CD14-positive monocyte (primary cell): ENCODE measurements at regions of chr20 and their contacts with region 1.

Region 1: DNA sequence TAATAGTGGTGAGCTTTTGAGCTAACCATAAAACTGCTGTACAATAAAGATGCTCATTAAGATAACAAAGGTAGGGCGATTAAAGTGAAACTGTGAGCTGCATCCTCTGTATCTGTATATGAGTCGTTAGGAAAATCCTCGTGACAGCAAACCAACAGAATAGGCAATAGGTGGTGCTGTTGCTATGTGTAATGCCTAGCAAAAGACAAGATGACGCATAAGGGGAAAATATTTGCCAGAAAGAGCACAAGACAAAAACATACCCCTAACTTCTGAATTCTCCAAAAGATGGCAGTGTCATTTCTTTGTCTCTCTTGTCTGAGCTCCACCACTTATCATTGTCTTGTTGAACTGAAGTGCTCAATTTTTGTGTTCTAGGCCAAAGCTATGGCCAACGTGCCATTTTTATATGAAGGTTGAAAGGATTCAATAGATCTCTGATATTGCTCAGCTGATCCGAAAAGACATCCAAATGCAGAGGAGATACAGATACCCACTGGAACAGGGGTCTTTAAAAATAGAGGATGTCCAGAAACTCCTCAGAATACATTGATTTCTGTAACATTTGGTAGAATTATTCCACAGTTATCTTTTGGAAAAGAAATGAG is 56.3 kb upstream of the ANKEF1 start:
- DNase-seq: peak; percentile 64 to 80 (median 79)
- H3K4me3 ChIP-seq: no peak overlapping the region
- H3K4me3 Mint-ChIP-seq: no peak overlapping the region
- H3K27ac ChIP-seq: no peak overlapping the region
- H3K27ac Mint-ChIP-seq: no peak overlapping the region
- H3K4me1 ChIP-seq: peaks cover 0 to 4% of the 10 kb centered on the region in 2 donors
- H3K4me1 Mint-ChIP-seq: peaks cover 6% of the 10 kb centered on the region
- H3K27me3 ChIP-seq: peaks cover 0 to 11% of the 10 kb centered on the region in 2 donors
- H3K27me3 Mint-ChIP-seq: peaks cover 5 to 9% (median 6%) of the 10 kb centered on the region in 3 donors
- CTCF ChIP-seq: peak; percentile 80

Region 2: DNA sequence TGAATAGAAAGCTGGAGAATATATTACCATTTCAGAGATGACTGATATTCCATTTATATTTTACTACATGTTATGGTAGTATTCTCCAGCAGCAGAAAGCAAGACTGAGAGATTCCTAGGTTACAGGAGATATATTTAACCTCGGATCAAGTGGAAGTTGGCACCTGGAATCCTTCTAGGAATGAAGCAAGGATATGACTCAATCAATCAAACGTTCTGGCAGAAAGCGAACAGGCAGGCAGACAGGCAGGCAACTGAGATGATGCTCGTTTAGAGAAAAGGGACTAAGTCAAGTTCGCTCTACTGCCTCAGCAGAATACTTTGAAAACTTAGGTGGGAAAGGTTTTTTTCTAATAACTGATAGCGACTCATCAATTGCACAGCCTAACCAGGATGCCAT is 185.8 kb before region 1 on chr20:
- intact Hi-C with region 1: no loop called
- DNase-seq: no peak
- H3K4me3 ChIP-seq: no peak overlapping the region
- H3K4me3 Mint-ChIP-seq: no peak overlapping the region
- H3K27ac ChIP-seq: no peak overlapping the region
- H3K27ac Mint-ChIP-seq: no peak overlapping the region
- H3K4me1 ChIP-seq: no peaks in the 10 kb centered on the region
- H3K4me1 Mint-ChIP-seq: no peaks in the 10 kb centered on the region
- H3K27me3 ChIP-seq: no peaks in the 10 kb centered on the region
- H3K27me3 Mint-ChIP-seq: peaks cover 0 to 2% (median 1%) of the 10 kb centered on the region in 3 donors
- CTCF ChIP-seq: no peak

Region 3: DNA sequence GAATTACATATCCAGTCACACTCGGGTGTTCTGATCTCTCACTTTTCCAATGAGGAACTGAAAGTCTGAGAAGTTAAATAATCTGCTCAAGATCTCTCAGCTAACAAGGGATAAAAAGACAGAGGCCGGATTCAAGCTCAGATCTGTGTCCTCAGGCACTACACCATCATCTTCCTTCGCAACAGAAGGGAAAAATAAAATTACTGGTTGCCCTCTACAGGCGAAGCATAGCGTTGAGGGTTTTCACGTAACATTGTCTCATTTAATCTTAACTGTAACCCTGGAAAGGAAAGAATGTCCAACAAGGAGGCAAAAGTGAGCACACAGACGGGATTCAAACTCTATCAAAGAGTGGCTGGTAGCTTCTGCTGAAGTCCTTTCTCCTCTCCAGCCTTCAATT is 11.5 kb before region 1 on chr20:
- intact Hi-C with region 1: no loop called
- DNase-seq: no peak
- H3K4me3 ChIP-seq: no peak overlapping the region
- H3K4me3 Mint-ChIP-seq: no peak overlapping the region
- H3K27ac ChIP-seq: no peak overlapping the region
- H3K27ac Mint-ChIP-seq: no peak overlapping the region
- H3K4me1 ChIP-seq: no peaks in the 10 kb centered on the region
- H3K4me1 Mint-ChIP-seq: peaks cover 2% of the 10 kb centered on the region
- H3K27me3 ChIP-seq: no peaks in the 10 kb centered on the region
- H3K27me3 Mint-ChIP-seq: peaks cover 6 to 14% (median 7%) of the 10 kb centered on the region in 3 donors
- CTCF ChIP-seq: no peak

Region 4: DNA sequence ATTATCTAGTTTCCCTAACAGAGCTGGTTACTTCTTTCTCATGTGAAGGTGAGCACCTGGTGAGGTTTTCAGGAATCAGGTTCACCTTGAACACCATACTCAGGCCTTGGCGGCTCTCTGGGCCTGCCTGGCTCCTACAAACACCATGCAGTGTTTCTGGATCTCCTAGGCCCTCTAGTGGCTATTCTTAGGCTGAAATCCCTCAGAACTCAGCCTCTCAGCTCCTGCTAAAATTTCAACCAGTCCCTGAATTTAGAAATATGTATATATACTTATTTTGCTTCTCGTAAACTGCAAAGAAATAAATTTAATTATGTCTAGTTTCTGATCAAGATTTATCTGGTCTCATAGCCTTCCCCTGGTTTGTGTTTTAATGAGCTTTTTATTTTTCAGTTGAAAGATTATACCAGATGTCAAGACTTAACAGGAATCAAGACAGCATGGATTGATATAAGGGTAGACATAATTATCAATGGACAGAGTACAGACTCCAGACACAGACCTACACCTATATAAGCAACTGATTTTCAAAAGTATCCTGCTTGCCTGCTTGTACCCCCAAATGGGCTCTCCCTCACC is 112.2 kb after region 1 on chr20:
- intact Hi-C with region 1: loop called (anchors 2 to 10 kb)
- DNase-seq: peak; percentile 15 to 42 (median 35)
- H3K4me3 ChIP-seq: no peak overlapping the region
- H3K4me3 Mint-ChIP-seq: no peak overlapping the region
- H3K27ac ChIP-seq: no peak overlapping the region
- H3K27ac Mint-ChIP-seq: no peak overlapping the region
- H3K4me1 ChIP-seq: no peaks in the 10 kb centered on the region
- H3K4me1 Mint-ChIP-seq: no peaks in the 10 kb centered on the region
- H3K27me3 ChIP-seq: no peaks in the 10 kb centered on the region
- H3K27me3 Mint-ChIP-seq: peaks cover 0 to 2% (median 1%) of the 10 kb centered on the region in 3 donors
- CTCF ChIP-seq: peak; percentile 75

Region 5: GRCh38 chr20:10219452-10219791 is 240.9 kb after region 1 on chr20:
- intact Hi-C with region 1: loop called in 1 of 2 experiments (anchors 10 kb)
- DNase-seq: peak; percentile 30 to 42 (median 34)
- H3K4me3 ChIP-seq: peak overlapping the region in 1 of 3 experiments; percentile 59
- H3K4me3 Mint-ChIP-seq: peak overlapping the region in 1 of 2 donors; percentile 84
- H3K27ac ChIP-seq: no peak overlapping the region
- H3K27ac Mint-ChIP-seq: no peak overlapping the region
- H3K4me1 ChIP-seq: peaks cover 4 to 7% of the 10 kb centered on the region in 2 donors
- H3K4me1 Mint-ChIP-seq: peaks cover 11% of the 10 kb centered on the region
- H3K27me3 ChIP-seq: peaks cover 36 to 44% of the 10 kb centered on the region in 2 donors
- H3K27me3 Mint-ChIP-seq: peaks cover 39 to 45% (median 42%) of the 10 kb centered on the region in 3 donors
- CTCF ChIP-seq: no peak

Region 6: DNA sequence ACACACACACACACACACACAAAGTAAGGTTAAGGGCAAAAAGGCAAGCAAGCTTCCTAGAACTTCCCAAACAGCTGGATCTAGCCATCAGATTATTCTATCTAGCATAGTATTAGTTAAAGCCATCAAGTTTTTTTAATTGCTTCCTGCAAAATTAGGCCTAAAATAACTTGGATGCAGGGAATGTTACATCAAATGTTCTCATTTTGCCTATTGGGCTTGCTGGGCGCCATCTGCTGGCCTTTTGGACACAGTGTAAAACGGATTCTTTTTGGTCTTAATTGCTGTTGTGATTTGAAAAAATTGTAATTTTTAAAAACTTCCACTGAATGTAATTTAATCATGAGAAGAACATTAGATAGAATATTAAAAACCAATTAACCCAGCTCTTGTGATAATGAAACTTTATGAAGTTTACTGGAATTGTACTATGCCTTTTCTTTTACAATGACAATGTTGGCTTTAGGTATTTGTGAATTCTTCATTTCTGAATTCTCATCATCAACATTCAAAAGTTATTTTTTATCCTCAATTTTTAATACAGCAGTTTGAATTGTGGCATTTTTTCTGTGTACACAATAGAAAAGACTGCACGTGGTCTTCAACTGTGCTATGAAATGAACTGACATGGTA is 448.7 kb after region 1 on chr20:
- intact Hi-C with region 1: loop called (anchors 2 to 5 kb)
- DNase-seq: peak; percentile 25 to 47 (median 38)
- H3K4me3 ChIP-seq: no peak overlapping the region
- H3K4me3 Mint-ChIP-seq: no peak overlapping the region
- H3K27ac ChIP-seq: no peak overlapping the region
- H3K27ac Mint-ChIP-seq: no peak overlapping the region
- H3K4me1 ChIP-seq: peaks cover 4 to 7% of the 10 kb centered on the region in 2 donors
- H3K4me1 Mint-ChIP-seq: peaks cover 28% of the 10 kb centered on the region
- H3K27me3 ChIP-seq: no peaks in the 10 kb centered on the region
- H3K27me3 Mint-ChIP-seq: no peaks in the 10 kb centered on the region
- CTCF ChIP-seq: peak; percentile 82